ENCODE measurements at regions of chr18 and their contacts with region 1.

Region 1: GRCh38 chr18:3177902-3178687 is 41.7 kb downstream of the MYOM1 start:
- DNase-seq: peak; percentile 23 to 60
- ATAC-seq: peak; percentile 25 to 76 (median 54)
- H3K4me3 ChIP-seq: no peak overlapping the region
- H3K27ac ChIP-seq: peak overlapping the region in 8 of 10 donors; percentile 19 to 85 (median 53)
- H3K4me1 ChIP-seq: peaks cover 0 to 53% (median 21%) of the 10 kb centered on the region in 9 donors
- H3K27me3 ChIP-seq: no peaks in the 10 kb centered on the region
- CTCF ChIP-seq: no peak

Region 2: GRCh38 chr18:3217948-3218647 is 40.0 kb after region 1 on chr18:
- intact Hi-C with region 1: loop called in 2 of 10 experiments (anchors 5 kb)
- DNase-seq: no peak
- ATAC-seq: peak in 7 of 8 donors; percentile 31 to 70 (median 54)
- H3K4me3 ChIP-seq: peak overlapping the region in 9 of 10 donors; percentile 44 to 65 (median 58)
- H3K27ac ChIP-seq: peak overlapping the region; percentile 80 to 96 (median 95)
- H3K4me1 ChIP-seq: peaks cover 0 to 35% (median 16%) of the 10 kb centered on the region in 9 donors
- H3K27me3 ChIP-seq: no peaks in the 10 kb centered on the region
- CTCF ChIP-seq: no peak

Region 3: GRCh38 chr18:3230401-3231334 is 52.6 kb after region 1 on chr18:
- intact Hi-C with region 1: loop called in 1 of 10 experiments (anchors 10 kb)
- DNase-seq: no peak
- ATAC-seq: no peak
- H3K4me3 ChIP-seq: no peak overlapping the region
- H3K27ac ChIP-seq: no peak overlapping the region
- H3K4me1 ChIP-seq: peaks cover 0 to 4% (median 0%) of the 10 kb centered on the region in 9 donors
- H3K27me3 ChIP-seq: no peaks in the 10 kb centered on the region
- CTCF ChIP-seq: no peak

Region 4: GRCh38 chr18:3424280-3424890 is 246.3 kb after region 1 on chr18:
- intact Hi-C with region 1: no loop called
- DNase-seq: no peak
- ATAC-seq: no peak
- H3K4me3 ChIP-seq: no peak overlapping the region
- H3K27ac ChIP-seq: no peak overlapping the region
- H3K4me1 ChIP-seq: no peaks in the 10 kb centered on the region
- H3K27me3 ChIP-seq: no peaks in the 10 kb centered on the region
- CTCF ChIP-seq: no peak

Region 5: DNA sequence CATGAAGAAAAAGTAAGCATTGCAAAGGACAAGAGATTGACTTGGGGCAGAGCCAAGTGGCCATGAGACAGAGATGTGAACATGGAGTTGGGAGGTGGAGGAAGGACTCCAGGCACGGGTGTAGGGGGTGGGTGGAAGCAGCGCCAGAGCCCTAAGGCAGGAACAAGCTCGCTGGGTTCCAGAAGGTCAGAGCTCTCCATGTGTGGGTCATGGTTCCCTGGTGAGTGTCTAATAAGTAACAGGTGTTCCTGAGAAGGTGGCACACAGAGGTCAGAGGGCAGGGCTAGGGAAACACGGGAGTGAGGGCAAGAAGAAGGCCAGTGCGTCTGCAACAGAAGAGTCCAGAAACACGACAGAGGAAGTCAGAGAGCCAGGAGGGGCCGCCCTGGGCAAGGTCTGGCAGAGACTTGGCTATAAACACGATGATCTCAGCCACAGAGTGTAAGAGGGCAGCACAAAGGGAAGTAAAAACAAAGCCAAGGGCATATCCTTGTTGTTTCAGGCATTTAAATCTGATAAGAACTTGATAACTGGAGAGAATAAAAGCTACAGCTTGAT is 532.7 kb after region 1 on chr18:
- intact Hi-C with region 1: no loop called
- DNase-seq: peak in 1 of 2 donors; percentile 35
- ATAC-seq: peak; percentile 47 to 81 (median 76)
- H3K4me3 ChIP-seq: no peak overlapping the region
- H3K27ac ChIP-seq: peak overlapping the region in 1 of 10 donors; percentile 47
- H3K4me1 ChIP-seq: peaks cover 0 to 18% (median 0%) of the 10 kb centered on the region in 9 donors
- H3K27me3 ChIP-seq: peaks cover 0 to 3% (median 0%) of the 10 kb centered on the region in 7 donors
- CTCF ChIP-seq: no peak

Measured in heart right ventricle (tissue), 16 donors.